WTC11 (cell line): ENCODE measurements at regions of chr2 and their contacts with region 1.

Region 1: GRCh38 chr2:88187038-88187676 is 17.0 kb downstream of the THNSL2 start:
- DNase-seq: peak; percentile 89
- ATAC-seq: peak; percentile 78
- H3K4me3 Mint-ChIP-seq: no peak overlapping the region
- H3K27ac Mint-ChIP-seq: no peak overlapping the region
- H3K4me1 Mint-ChIP-seq: peaks cover 19% of the 10 kb centered on the region
- H3K27me3 Mint-ChIP-seq: peaks cover 5% of the 10 kb centered on the region
- CTCF ChIP-seq: peak; percentile 65

Region 2: DNA sequence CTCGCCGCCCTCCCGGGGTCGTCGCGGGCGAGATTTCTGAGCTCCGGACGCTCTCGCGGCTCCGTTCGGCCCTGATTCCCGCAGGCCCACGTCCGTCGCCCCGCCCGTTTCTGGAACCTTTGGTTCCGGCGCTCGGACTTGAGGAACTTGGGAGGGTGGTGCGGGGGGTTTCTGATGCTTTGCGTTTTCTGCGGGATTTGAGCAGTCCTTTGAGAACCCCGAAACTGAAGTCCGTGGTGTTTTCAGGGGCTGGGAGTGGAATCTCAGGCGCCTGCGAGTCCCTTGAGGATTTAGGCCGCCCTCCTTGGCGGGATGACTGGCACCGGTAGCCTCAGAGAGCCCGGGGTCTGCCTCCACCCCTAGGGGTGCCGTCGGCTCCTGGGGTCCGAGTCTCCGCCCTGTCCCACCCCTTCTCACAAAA is 16.7 kb before region 1 on chr2:
- CTCF ChIA-PET with region 1: interaction called, 10 read pairs
- POLR2A ChIA-PET with region 1: no interaction called
- DNase-seq: peak; percentile 46
- ATAC-seq: peak; percentile 84
- H3K4me3 Mint-ChIP-seq: peak overlapping the region; percentile 80
- H3K27ac Mint-ChIP-seq: no peak overlapping the region
- H3K4me1 Mint-ChIP-seq: peaks cover 22% of the 10 kb centered on the region
- H3K27me3 Mint-ChIP-seq: no peaks in the 10 kb centered on the region
- CTCF ChIP-seq: no peak

Region 3: GRCh38 chr2:88212251-88212790 is 25.2 kb after region 1 on chr2:
- CTCF ChIA-PET with region 1: interaction called, 27 read pairs
- POLR2A ChIA-PET with region 1: no interaction called
- DNase-seq: peak; percentile 56
- ATAC-seq: peak; percentile 95
- H3K4me3 Mint-ChIP-seq: peak overlapping the region; percentile 44; the same call in 1 of the 2 replicates
- H3K27ac Mint-ChIP-seq: no peak overlapping the region; the same call in 1 of the 2 replicates
- H3K4me1 Mint-ChIP-seq: peaks cover 21% of the 10 kb centered on the region
- H3K27me3 Mint-ChIP-seq: no peaks in the 10 kb centered on the region; the same call in 1 of the 2 replicates
- CTCF ChIP-seq: peak; percentile 57

Region 4: GRCh38 chr2:88350331-88351248 is 163.4 kb after region 1 on chr2:
- CTCF ChIA-PET with region 1: interaction called, 11 read pairs
- POLR2A ChIA-PET with region 1: no interaction called
- DNase-seq: peak; percentile 91
- ATAC-seq: peak; percentile 82
- H3K4me3 Mint-ChIP-seq: peak overlapping the region; percentile 70
- H3K27ac Mint-ChIP-seq: peak overlapping the region; percentile 84
- H3K4me1 Mint-ChIP-seq: peaks cover 20% of the 10 kb centered on the region
- H3K27me3 Mint-ChIP-seq: peaks cover 35% of the 10 kb centered on the region
- CTCF ChIP-seq: peak; percentile 97

Region 5: GRCh38 chr2:88554189-88554588 is 367.0 kb after region 1 on chr2:
- CTCF ChIA-PET with region 1: interaction called, 10 read pairs
- POLR2A ChIA-PET with region 1: no interaction called
- DNase-seq: peak; percentile 24
- ATAC-seq: peak; percentile 47
- H3K4me3 Mint-ChIP-seq: no peak overlapping the region
- H3K27ac Mint-ChIP-seq: no peak overlapping the region
- H3K4me1 Mint-ChIP-seq: peaks cover 28% of the 10 kb centered on the region
- H3K27me3 Mint-ChIP-seq: peaks cover 3% of the 10 kb centered on the region; the same call in 1 of the 2 replicates
- CTCF ChIP-seq: no peak